HCT116 (cell line): ENCODE measurements at regions of chr15 and their contacts with region 1.

Region 1: GRCh38 chr15:67863442-67863987 is 23.7 kb upstream of the RNU6-1 start:
- DNase-seq: peak; percentile 46
- ATAC-seq: peak; percentile 98
- H3K4me3 ChIP-seq: peak overlapping the region; percentile 38 to 51
- H3K27ac ChIP-seq: peak overlapping the region; percentile 43; the same call in 1 of the 2 replicates
- H3K4me1 ChIP-seq: peaks cover 3 to 31% of the 10 kb centered on the region in 2 experiments; a peak in 3 of 4 replicates
- H3K27me3 ChIP-seq: no peaks in the 10 kb centered on the region
- CTCF ChIP-seq: peak; percentile 79 to 94 (median 84)
- POLR2A ChIP-seq: no peak
- RAD21 ChIP-seq: peak; percentile 94

Region 2: DNA sequence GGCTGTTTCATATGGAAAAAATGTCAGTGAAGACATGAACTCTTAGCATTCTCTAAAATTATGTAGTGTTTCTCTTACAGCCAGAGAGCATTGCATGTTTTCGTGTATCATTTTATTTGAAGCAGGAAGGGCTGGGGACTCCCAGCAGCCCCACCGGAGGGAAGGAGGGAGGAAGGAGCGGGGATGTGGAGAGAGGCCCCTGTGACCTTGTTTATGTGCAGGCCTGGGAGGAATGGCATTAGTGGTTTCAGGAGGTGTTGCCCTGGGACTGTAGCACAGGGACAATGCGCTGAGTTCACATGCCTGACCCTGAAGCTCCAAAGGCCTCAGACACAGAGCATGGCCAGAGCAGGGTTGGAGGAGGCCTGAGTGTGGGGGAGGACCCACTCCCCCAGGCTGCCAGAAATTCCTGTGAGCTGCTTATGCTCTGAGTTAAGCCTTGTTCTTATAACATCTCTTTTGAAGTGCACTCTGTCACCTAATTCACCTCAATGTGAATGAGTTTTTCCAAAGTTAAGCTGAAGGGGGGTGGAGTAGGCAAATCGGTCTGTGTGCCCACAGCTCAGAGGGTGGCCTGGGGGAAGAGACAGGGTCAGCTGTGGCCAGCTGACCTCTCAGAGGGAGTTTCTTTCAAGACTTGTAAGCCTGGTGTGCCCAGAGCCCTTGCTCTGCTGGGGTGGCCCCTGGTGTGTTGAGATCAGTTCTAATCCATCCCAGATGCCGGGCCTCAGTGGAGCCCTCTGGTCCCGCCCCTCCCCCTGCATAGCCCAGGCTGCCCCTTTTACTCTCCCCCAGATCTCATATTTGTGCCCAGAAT is 19.7 kb before region 1 on chr15:
- CTCF ChIA-PET with region 1: no interaction called
- POLR2A ChIA-PET with region 1: no interaction called
- RAD21 ChIA-PET with region 1: no interaction called
- intact Hi-C with region 1: no loop called
- DNase-seq: no peak
- ATAC-seq: no peak
- H3K4me3 ChIP-seq: no peak overlapping the region
- H3K27ac ChIP-seq: no peak overlapping the region
- H3K4me1 ChIP-seq: peaks cover 5 to 33% of the 10 kb centered on the region in 2 experiments; a peak in 3 of 4 replicates
- H3K27me3 ChIP-seq: no peaks in the 10 kb centered on the region
- CTCF ChIP-seq: no peak
- POLR2A ChIP-seq: no peak
- RAD21 ChIP-seq: no peak

Region 3: GRCh38 chr15:68051109-68051508 is 187.6 kb after region 1 on chr15:
- CTCF ChIA-PET with region 1: interaction called, 3 read pairs
- POLR2A ChIA-PET with region 1: no interaction called
- RAD21 ChIA-PET with region 1: no interaction called
- intact Hi-C with region 1: loop called (anchors 1 kb)
- DNase-seq: no peak
- ATAC-seq: no peak
- H3K4me3 ChIP-seq: no peak overlapping the region
- H3K27ac ChIP-seq: no peak overlapping the region
- H3K4me1 ChIP-seq: peaks cover 9 to 15% of the 10 kb centered on the region in 2 experiments
- H3K27me3 ChIP-seq: no peaks in the 10 kb centered on the region
- CTCF ChIP-seq: peak in 2 of 3 experiments; percentile 5 to 28; a peak in 1 of 6 replicates
- POLR2A ChIP-seq: no peak
- RAD21 ChIP-seq: peak; percentile 17; the same call in 1 of the 2 replicates

Region 4: GRCh38 chr15:68154923-68155559 is 291.5 kb after region 1 on chr15:
- CTCF ChIA-PET with region 1: interaction called, 40 read pairs
- POLR2A ChIA-PET with region 1: interaction called, 3 read pairs
- RAD21 ChIA-PET with region 1: interaction called in 1 of 2 experiments, 11 read pairs
- intact Hi-C with region 1: loop called (anchors 1 kb)
- DNase-seq: peak; percentile 27
- ATAC-seq: peak; percentile 72
- H3K4me3 ChIP-seq: no peak overlapping the region
- H3K27ac ChIP-seq: no peak overlapping the region
- H3K4me1 ChIP-seq: no peaks in the 10 kb centered on the region
- H3K27me3 ChIP-seq: no peaks in the 10 kb centered on the region
- CTCF ChIP-seq: peak; percentile 71 to 84 (median 76); a peak in 5 of 6 replicates
- POLR2A ChIP-seq: no peak
- RAD21 ChIP-seq: peak; percentile 84

Region 5: DNA sequence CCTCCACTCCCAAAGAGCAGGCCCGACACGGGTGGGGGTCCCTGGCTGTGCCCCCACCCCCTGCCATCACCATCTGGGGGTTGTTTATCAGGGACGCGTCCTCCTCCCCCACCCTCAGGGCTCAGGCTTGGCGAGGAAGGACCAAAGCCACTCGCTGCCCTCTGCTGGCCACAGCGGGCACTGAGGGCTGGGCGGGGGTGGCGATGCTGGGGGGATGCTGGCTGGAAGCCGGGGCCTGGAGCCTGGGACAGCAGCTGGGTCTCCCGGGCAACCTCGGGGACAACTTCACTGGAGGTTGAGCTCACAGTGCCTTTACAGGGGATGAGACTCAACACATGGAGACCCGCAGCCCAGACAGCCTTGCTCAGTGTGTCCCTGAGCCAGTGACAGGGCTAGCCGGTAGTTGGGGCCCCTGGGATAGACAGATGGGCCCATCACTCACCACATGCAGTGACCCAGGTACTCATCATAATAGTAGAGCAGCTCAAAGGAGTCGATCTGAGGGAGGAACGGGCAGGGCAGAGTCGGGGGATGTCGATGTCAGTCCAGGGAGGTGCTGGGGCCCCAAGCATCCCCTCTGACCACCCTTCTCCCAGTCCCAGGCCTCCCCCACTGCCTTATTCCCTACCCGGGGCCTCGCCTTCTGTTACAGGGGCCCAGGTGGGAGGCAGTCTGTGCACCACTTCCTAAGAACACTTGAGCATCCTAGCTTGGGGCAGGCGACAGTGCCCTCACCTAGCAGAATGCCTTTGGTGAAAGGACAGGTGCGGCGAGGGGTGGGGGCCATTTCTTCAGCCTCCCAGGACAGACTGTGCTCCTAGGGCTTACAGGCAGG is 347.5 kb after region 1 on chr15:
- CTCF ChIA-PET with region 1: no interaction called
- POLR2A ChIA-PET with region 1: no interaction called
- RAD21 ChIA-PET with region 1: no interaction called
- intact Hi-C with region 1: loop called (anchors 5 kb)
- DNase-seq: no peak
- ATAC-seq: peak; percentile 89
- H3K4me3 ChIP-seq: no peak overlapping the region
- H3K27ac ChIP-seq: no peak overlapping the region; the same call in 1 of the 2 replicates
- H3K4me1 ChIP-seq: peaks cover 0 to 7% of the 10 kb centered on the region in 2 experiments; a peak in 2 of 4 replicates
- H3K27me3 ChIP-seq: no peaks in the 10 kb centered on the region
- CTCF ChIP-seq: peak; percentile 52 to 91 (median 85); a peak in 5 of 6 replicates
- POLR2A ChIP-seq: no peak
- RAD21 ChIP-seq: peak; percentile 66